Ovary (tissue), 10 donors: ENCODE measurements at regions of chr14 and their contacts with region 1.

Region 1: DNA sequence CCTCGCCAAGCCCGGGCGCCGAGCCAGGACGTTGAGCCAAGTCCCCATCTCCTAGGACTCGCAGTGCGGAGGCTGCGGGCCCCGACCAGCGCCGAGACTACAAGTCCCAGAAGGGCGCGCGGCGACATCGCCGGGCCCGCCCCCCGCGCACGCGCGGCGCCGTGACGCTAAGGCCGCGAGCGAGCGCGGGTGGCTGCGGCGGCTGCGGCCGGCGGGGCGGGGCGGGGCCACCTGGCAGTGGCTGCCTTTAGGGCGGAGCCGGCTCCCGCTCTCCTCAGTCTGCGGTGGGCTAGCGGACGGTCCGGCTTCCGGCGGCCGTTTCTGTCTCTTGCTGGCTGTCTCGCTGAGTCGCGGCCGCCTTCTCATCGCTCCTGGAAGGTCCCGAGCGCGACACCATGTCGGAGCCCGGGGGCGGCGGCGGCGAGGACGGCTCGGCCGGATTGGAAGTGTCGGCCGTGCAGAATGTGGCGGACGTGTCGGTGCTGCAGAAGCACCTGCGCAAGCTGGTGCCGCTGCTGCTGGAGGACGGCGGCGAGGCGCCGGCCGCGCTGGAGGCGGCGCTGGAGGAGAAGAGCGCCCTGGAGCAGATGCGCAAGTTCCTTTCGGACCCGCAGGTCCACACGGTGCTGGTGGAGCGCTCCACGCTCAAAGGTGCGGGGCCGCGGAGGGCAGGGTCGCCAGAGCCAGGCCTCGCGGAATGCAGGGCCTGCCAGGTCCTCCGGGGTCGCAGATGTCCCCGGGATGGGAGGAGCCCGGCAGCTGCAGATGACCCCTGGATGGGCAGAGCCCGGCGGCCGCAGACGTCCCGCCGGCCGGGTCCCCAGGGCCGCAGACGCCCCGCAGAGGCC is at the start of gene DYNC1H1:
- DNase-seq: peak; percentile 96 to 99 (median 99)
- H3K4me3 ChIP-seq: peak within 1 kb of the TSS; percentile 90
- H3K27ac ChIP-seq: peak within 1 kb of the TSS; percentile 22 to 62
- H3K4me1 ChIP-seq: peaks cover 4% of the 10 kb centered on the region
- H3K27me3 ChIP-seq: no peaks in the 10 kb centered on the region
- CTCF ChIP-seq: no peak
- EP300 ChIP-seq: no peak
- POLR2A ChIP-seq: peak; percentile 96
- total RNA-seq, gene DYNC1H1: 221 to 373 (median 292) TPM

Region 2: GRCh38 chr14:101707068-101707842 is 257.3 kb before region 1 on chr14:
- intact Hi-C with region 1: loop called in 1 of 4 experiments (anchors 10 kb)
- DNase-seq: peak; percentile 34 to 68 (median 46)
- H3K4me3 ChIP-seq: no peak overlapping the region
- H3K27ac ChIP-seq: no peak overlapping the region
- H3K4me1 ChIP-seq: no peaks in the 10 kb centered on the region
- H3K27me3 ChIP-seq: no peaks in the 10 kb centered on the region
- CTCF ChIP-seq: peak; percentile 69 to 90 (median 87)
- EP300 ChIP-seq: no peak
- POLR2A ChIP-seq: no peak

Region 3: DNA sequence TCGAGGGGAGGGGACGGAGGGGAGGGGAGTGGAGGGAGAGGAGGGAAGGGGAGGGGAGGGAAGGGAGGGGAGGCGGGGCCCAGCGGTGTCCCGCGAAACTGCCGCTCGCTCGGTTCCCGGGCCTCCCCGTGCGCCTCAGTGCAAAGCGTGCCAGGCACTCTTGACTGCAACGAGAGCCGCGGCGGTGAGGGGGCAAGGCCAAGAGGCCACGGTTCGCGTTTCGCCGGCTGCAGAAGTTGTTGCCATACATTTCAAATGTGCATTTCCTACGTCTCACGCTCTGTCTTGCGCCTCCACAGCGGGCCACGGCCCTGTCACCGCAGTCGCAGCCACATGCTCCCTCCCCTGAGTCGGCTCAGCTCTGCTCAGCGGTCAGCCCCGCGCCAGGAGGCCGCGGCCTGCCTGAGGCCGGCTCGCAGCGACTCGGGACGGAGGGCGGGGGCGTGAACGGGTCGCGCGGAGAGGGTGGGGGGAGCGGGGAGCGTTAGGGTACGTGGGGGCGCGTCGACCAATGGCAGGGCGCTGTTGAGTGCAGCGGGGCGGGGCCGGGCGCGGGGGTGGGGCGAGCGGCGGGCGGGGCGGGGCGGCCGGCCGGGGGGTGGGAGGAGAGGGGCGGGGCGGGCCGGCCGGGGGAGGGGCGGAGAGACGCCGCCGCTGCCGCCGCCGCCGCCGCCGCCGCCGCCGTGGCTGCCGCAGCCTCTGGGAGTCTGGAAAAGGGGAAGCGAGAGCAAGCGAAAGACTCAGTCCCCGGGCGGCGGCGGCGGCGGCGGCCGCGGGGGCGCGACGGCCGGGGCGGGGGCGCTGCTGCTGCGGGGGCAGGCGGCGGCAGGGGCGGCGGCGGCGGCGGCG is 203.3 kb before region 1 on chr14 and contains the start of gene PPP2R5C:
- intact Hi-C with region 1: loop called in 1 of 4 experiments (anchors 5 kb)
- DNase-seq: peak; percentile 91 to 94 (median 93)
- H3K4me3 ChIP-seq: peak within 1 kb of the TSS; percentile 91
- H3K27ac ChIP-seq: peak within 1 kb of the TSS; percentile 80 to 96
- H3K4me1 ChIP-seq: no peaks in the 10 kb centered on the region
- H3K27me3 ChIP-seq: no peaks in the 10 kb centered on the region
- CTCF ChIP-seq: no peak
- EP300 ChIP-seq: no peak
- POLR2A ChIP-seq: peak; percentile 34
- total RNA-seq, gene PPP2R5C: 63.1 to 136 (median 111) TPM

Region 4: GRCh38 chr14:101774006-101774795 is 190.3 kb before region 1 on chr14:
- intact Hi-C with region 1: loop called in 1 of 4 experiments (anchors 10 kb)
- DNase-seq: no peak
- H3K4me3 ChIP-seq: no peak overlapping the region
- H3K27ac ChIP-seq: no peak overlapping the region
- H3K4me1 ChIP-seq: no peaks in the 10 kb centered on the region
- H3K27me3 ChIP-seq: no peaks in the 10 kb centered on the region
- CTCF ChIP-seq: no peak
- EP300 ChIP-seq: no peak
- POLR2A ChIP-seq: no peak

Region 5: DNA sequence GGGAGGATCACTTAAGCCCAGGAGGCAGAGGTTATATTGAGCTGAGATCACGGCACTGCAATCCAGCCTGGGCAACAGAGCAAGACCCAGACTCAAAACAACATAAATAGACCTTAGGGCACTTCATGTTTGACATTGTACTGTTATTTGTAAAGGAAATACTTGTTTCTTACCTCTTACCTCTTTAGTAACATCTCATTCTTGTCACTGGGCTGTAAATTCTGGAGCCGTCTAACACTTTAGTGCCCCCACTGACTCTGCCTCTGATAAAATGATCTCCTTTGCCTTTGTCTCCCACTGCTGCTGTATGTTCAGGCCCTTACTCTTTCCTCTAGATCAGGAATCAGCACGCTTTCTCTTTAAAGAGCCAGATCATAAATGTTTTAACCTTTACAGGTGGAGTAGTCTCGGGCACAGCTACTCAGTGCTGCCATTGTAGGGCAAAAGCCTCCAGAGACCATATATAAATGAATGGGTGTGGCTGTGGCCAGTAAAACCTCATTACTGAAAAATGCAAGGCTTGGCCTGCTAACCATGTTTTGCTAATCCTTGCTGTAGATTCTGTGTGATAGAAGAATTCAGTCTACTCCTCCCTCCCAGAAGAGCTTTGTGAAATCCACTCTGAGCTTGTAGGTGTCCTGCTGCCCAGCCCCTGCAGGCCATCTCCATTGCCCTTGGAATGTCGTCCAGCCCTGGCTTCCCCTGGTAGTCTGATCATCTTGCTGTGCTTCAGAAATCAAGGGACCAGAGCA is 64.1 kb after region 1 on chr14:
- intact Hi-C with region 1: no loop called
- DNase-seq: no peak
- H3K4me3 ChIP-seq: no peak overlapping the region
- H3K27ac ChIP-seq: no peak overlapping the region
- H3K4me1 ChIP-seq: no peaks in the 10 kb centered on the region
- H3K27me3 ChIP-seq: no peaks in the 10 kb centered on the region
- CTCF ChIP-seq: no peak
- EP300 ChIP-seq: no peak
- POLR2A ChIP-seq: no peak

Region 6: DNA sequence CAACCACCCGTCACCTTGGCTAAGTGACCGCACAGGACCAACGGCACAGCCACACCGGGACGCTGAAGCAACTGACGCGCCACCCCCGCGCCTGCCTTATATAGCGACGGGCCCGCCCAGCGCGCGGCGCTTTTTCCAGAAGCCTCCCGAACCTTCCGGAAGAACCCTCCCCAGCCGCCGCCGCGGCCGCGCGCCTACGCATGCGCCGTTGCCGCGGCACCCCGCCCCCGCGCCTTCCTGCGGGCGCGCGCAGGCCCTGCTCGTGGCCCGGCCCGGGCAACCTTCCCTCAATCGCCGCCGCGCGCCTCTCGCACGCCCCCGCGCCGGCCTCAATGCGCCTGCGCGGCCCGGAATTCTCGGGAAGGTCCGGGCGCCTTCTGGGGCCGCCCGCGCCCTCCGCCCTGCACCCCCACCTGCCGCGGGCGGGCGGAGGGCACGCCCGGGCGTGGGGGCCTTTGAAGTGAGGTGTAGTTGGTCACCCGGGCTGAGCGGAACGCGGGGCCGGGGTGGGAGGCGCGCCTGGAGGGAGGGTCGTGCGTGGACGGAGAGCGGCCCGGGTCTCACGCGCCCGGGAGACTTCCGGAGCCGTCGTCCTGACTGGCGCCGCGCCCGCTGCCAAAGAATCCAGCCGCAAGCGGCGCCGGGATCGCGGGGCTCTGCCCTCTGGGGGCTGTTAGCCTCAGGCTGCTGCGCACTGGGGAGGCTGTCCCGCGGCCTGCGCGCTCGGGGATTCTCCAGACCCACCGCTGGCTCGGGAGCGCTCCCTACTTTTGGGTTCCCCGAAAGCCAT is 122.6 kb after region 1 on chr14 and contains the start of gene HSP90AA1:
- intact Hi-C with region 1: loop called in 2 of 4 experiments (anchors 10 kb)
- DNase-seq: peak; percentile 89 to 97 (median 96)
- H3K4me3 ChIP-seq: peak within 1 kb of the TSS; percentile 96
- H3K27ac ChIP-seq: peak within 1 kb of the TSS; percentile 100
- H3K4me1 ChIP-seq: peaks cover 13% of the 10 kb centered on the region
- H3K27me3 ChIP-seq: no peaks in the 10 kb centered on the region
- CTCF ChIP-seq: peak in 2 of 3 donors; percentile 14 to 24
- EP300 ChIP-seq: no peak
- POLR2A ChIP-seq: peak; percentile 90
- total RNA-seq, gene HSP90AA1: 250 to 502 (median 299) TPM

Region 7: DNA sequence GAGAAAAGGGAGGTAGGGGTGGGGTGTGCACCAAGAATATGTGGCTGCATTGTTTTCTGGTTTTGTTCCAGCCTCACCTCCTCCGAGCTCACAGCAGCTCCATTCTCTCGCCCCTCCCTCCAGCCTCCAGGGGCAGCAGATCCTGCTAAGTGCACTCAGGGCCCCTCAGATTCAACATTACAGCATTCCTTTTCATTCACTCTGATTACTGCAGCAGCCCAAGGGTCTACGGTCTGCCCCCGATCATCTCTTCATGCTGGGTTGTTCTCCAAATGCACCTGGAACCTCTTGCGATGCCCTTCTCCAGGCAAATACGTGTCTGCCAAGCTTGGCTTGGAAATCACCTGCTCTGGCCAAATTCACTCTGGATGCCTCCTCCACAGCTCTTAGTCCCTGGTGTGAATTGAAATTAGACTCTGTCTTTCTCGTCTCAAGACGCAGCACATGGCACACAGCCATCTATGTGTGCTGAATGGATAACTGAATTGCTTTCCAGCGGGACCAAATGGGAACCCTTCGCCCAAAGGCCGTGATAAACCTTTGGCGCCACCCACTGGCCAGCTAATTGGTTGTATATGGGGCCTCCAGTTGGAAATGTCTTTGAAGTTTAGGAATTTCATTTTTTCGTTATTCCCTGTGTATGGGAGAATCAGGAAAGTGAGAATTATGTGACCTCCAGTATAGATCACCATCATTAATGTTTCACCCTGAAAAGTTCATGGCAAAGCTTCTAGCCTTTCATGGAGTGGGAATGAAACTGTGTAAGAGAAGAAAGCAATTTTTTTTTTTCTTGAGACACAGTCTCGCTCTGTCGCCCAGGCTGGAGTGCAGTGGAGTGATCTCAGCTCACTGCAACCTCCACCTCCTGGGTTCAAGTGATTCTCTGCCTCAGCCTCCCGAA is 131.9 kb after region 1 on chr14:
- intact Hi-C with region 1: loop called in 2 of 4 experiments (anchors 5 to 10 kb)
- DNase-seq: peak; percentile 84 to 92 (median 91)
- H3K4me3 ChIP-seq: no peak overlapping the region
- H3K27ac ChIP-seq: no peak overlapping the region
- H3K4me1 ChIP-seq: no peaks in the 10 kb centered on the region
- H3K27me3 ChIP-seq: no peaks in the 10 kb centered on the region
- CTCF ChIP-seq: peak; percentile 54 to 84 (median 77)
- EP300 ChIP-seq: no peak
- POLR2A ChIP-seq: no peak

Region 8: GRCh38 chr14:102316743-102317563 is 352.4 kb after region 1 on chr14:
- intact Hi-C with region 1: loop called in 1 of 4 experiments (anchors 2 kb)
- DNase-seq: peak; percentile 83 to 93 (median 90)
- H3K4me3 ChIP-seq: peak overlapping the region; percentile 43
- H3K27ac ChIP-seq: peak overlapping the region; percentile 5 to 49
- H3K4me1 ChIP-seq: peaks cover 13% of the 10 kb centered on the region
- H3K27me3 ChIP-seq: no peaks in the 10 kb centered on the region
- CTCF ChIP-seq: peak; percentile 93 to 94 (median 94)
- EP300 ChIP-seq: no peak
- POLR2A ChIP-seq: no peak